ENCODE measurements at regions of chr3 and their contacts with region 1.

Region 1: GRCh38 chr3:166322394-166322793 is 485.2 kb upstream of the BCHE start:
- DNase-seq: no peak
- H3K4me3 ChIP-seq: no peak overlapping the region
- H3K27ac ChIP-seq: no peak overlapping the region
- H3K4me1 ChIP-seq: no peaks in the 10 kb centered on the region
- H3K27me3 ChIP-seq: no peaks in the 10 kb centered on the region
- CTCF ChIP-seq: no peak
- POLR2A ChIP-seq: no peak

Region 2: DNA sequence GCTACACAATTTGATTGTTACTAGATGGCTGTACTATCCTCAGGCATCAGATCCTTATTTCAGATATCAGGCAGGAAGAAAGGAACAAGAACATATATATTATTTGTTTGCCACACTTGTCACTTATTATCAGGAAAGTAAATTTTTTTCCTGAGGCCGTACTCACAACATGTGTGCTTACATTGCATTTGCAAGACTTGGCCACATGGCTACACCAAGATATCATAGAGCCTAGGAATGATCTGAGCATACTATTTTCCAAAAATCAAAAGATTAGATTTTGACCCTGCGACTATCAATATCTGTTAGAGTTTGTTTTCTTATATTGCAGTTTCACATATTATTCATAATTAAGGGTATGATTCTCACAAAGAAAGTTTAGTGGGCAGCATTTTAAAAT is 58.9 kb before region 1 on chr3:
- intact Hi-C with region 1: loop called (anchors 2 kb)
- DNase-seq: no peak
- H3K4me3 ChIP-seq: no peak overlapping the region
- H3K27ac ChIP-seq: no peak overlapping the region
- H3K4me1 ChIP-seq: no peaks in the 10 kb centered on the region
- H3K27me3 ChIP-seq: no peaks in the 10 kb centered on the region
- CTCF ChIP-seq: no peak
- POLR2A ChIP-seq: no peak

Measured in testis (tissue), 5 donors.